ENCODE measurements at regions of chr1 and their contacts with region 1.

Region 1: GRCh38 chr1:119675349-119676345 is 27.6 kb upstream of the ZNF697 start:
- DNase-seq: peak in 9 of 10 donors; percentile 49 to 86 (median 76)

Region 2: GRCh38 chr1:119549719-119550132 is 125.9 kb before region 1 on chr1:
- intact Hi-C with region 1: loop called (anchors 1 kb)
- DNase-seq: peak in 8 of 10 donors; percentile 45 to 92 (median 67)

Region 3: GRCh38 chr1:119613769-119614720 is 61.6 kb before region 1 on chr1:
- intact Hi-C with region 1: loop called (anchors 1 kb)
- DNase-seq: peak; percentile 57 to 97 (median 87)

Region 4: DNA sequence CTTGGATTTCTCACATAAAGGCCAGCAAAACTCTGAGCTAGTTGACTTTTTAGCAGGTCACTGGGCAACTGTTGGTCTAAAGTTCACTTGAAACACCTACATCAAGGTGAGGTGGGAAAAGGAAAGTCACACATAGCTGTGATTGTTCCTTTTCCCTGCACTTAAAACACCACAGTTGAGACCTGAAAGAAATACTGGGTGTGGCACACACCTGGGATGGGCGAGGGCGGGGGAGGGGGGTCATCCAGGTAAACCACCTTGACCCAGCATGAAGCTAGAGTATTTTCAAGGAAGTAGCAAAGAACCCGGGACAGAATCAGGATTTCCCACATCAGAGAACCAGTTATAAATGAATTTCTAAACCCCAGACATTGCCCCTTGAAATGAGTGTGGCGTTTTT is 53.9 kb before region 1 on chr1:
- intact Hi-C with region 1: loop called (anchors 2 kb)
- DNase-seq: no peak

Region 5: GRCh38 chr1:119647734-119648619 is 27.7 kb before region 1 on chr1 and contains the start of gene ZNF697:
- intact Hi-C with region 1: loop called (anchors 1 kb)
- DNase-seq: peak; percentile 97 to 100 (median 98)